AG04450 (cell line): ENCODE measurements at regions of chr20 and their contacts with region 1.

Region 1: GRCh38 chr20:34506480-34506879 is 9.7 kb upstream of the DYNLRB1 start:
- DNase-seq: no peak
- H3K4me3 ChIP-seq: no peak overlapping the region
- H3K27ac ChIP-seq: no peak overlapping the region
- H3K27me3 ChIP-seq: no peaks in the 10 kb centered on the region
- CTCF ChIP-seq: no peak

Region 2: GRCh38 chr20:34558320-34559218 is 52.1 kb after region 1 on chr20 and contains the start of gene MAP1LC3A:
- CTCF ChIA-PET with region 1: no interaction called
- POLR2A ChIA-PET with region 1: interaction called, 13 read pairs
- DNase-seq: peak; percentile 88
- H3K4me3 ChIP-seq: peak within 1 kb of the TSS; percentile 71
- H3K27ac ChIP-seq: peak within 1 kb of the TSS; percentile 65
- H3K27me3 ChIP-seq: no peaks in the 10 kb centered on the region
- CTCF ChIP-seq: no peak
- polyA plus RNA-seq, gene MAP1LC3A: 15.9 and 26.7 TPM in 2 replicates

Region 3: DNA sequence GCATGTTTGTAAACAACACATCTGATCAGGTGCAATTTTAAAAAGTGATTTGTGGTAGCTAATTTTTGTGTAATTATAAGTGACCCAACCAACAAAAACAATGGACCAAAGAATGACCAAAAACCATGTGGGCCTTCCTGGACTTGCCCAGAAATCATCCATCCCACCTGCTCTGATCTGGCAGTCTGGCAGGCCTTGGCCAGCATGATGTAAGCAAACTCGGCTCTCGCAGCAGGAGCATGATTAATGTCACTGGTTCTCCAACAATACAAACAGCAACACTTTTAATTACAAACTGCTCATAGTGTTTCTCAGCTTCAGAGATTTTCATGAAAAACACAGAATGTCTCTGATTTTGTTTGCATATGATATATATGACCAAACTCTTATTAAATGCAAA is 213.8 kb after region 1 on chr20:
- CTCF ChIA-PET with region 1: no interaction called
- POLR2A ChIA-PET with region 1: no interaction called
- DNase-seq: no peak
- H3K4me3 ChIP-seq: no peak overlapping the region
- H3K27ac ChIP-seq: no peak overlapping the region
- H3K27me3 ChIP-seq: no peaks in the 10 kb centered on the region
- CTCF ChIP-seq: no peak